Activated CD4-positive, alpha-beta memory T cell treated with anti-CD3 and anti-CD28 coated beads for 36 hours (primary cell): ENCODE measurements at regions of chr1 and their contacts with region 1.

Region 1: DNA sequence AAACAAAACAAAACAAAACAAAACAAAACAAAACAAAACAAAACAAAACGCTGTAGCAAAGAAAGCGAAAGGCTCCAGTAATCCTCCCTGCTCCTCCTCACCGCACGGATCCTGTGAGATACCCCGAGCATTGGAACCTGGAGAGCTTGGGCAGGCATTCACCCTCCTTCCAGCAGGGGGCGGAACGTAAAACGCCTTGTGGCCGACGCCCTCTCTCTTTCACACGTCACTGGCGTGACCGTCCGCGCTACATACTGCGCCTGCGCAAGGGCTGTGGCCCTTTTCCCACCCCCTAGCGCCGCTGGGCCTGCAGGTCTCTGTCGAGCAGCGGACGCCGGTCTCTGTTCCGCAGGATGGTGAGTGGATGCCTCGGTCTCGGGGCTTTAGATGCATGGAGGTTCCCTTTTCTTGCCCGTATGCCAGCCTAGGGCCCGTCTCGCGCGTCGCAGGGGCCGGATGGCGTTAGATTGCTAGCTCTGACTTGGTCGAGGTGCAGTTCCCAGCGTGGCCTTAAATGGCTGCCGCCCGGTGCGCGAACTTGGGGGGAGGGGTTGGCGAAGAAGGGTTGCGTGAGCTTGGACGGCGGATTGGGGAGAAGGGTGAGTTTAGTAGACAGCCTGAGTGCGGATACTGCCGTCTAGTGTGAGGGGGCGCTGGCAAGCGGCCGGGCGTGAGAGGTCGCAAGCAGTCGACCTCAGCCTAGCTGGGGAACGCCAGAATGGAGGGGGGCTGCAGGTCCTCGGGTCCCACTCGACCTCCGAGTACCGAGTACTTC is at the start of gene RPL5:
- DNase-seq: peak; percentile 98
- H3K4me3 Mint-ChIP-seq: peak within 1 kb of the TSS; percentile 100
- H3K27ac Mint-ChIP-seq: peak within 1 kb of the TSS; percentile 95
- H3K4me1 Mint-ChIP-seq: peaks cover 39% of the 10 kb centered on the region
- H3K27me3 Mint-ChIP-seq: peaks cover 3% of the 10 kb centered on the region
- total RNA-seq, gene RPL5: 1,530 to 1,539 TPM

Region 2: DNA sequence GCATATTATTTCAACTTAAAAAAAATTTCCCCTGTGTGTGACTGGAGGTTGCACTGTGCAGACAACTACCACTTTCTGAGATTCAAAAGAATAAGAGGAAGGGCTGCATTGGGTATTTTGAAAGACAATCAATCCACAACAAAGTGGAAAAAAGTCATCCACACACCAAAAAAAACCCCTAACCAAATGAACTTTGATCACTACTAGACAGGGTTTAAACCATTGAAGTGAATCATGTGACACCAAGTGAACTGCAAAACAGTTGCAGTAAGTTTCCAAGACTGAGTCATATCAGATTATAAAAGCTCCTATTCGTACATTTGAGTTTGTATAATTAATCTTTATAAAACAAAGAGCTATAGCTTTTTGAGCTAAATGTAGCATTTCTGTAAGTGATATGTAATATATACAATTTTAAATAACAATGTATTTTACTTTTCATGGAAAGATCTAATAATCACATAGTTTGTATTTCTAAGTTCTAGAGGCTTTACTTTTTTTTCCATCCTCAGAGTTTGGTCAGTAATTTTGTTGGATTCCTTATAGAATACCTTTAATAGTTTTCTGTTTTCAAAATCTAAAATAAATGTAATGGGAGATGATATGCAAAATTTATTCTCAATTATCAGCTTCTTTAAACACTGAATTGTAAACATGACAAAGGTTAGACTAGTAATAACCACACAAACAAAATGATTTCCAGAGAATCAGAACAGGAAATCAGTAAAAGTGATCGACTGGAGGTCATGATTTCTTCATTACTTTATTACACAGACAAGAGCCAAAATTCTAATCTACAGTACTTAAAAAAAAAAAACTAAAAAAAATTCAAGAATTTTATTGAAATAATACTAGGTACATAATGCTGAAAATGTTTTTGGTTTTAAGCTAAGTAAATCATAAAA is 294.7 kb before region 1 on chr1:
- CTCF ChIA-PET with region 1: interaction called, 3 read pairs
- POLR2A ChIA-PET with region 1: no interaction called
- intact Hi-C with region 1: loop called (anchors 1 kb)
- DNase-seq: no peak
- H3K4me3 Mint-ChIP-seq: peak overlapping the region; percentile 54
- H3K27ac Mint-ChIP-seq: peak overlapping the region; percentile 98
- H3K4me1 Mint-ChIP-seq: peaks cover 86% of the 10 kb centered on the region
- H3K27me3 Mint-ChIP-seq: no peaks in the 10 kb centered on the region

Region 3: DNA sequence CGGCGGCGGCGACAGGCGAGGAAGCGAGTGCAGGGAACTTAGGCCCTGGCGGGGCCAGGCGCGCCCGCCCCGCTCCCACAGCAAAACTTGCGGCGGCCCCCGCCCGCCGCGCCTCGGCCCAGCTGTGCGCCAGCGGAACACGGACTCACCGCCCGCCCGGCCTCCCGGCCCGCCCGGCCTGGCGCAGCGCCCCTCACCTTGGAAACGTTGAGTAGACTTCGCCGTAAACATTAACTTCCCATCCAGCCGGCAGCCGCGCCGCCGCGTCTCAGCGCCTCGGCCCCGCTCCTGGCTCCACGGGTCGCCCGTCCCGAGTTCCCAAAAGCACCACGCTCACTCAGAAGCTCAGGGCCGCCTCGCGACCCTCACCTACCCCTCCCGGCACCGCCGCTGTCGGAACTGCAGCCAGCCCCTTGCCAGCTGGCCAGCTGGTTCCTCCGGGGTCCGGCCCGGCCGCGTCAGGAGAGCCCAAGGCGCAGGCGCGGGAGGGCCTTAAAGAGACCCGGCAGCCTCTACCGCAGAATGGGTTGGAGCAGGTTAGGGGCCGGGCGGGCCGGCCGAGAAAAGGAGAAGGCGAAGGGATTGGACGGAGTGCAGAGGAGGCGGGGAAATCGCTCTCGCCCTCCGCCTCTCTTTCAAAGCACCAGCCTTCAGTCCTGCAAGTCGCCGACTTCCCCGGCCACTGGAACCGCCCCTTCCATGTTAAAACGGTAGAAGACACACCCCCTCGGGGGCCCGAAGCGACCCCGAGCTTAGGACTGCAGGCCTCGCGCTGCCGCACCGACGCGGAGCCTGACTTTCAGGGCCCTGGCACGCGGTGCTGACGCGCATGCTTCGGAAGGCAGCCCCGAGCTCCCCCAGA is 47.1 kb before region 1 on chr1 and contains the start of gene EVI5:
- CTCF ChIA-PET with region 1: no interaction called
- POLR2A ChIA-PET with region 1: no interaction called
- intact Hi-C with region 1: loop called (anchors 1 kb)
- DNase-seq: peak; percentile 70
- H3K4me3 Mint-ChIP-seq: peak within 1 kb of the TSS; percentile 71
- H3K27ac Mint-ChIP-seq: no peak within 1 kb of the TSS
- H3K4me1 Mint-ChIP-seq: peaks cover 13% of the 10 kb centered on the region
- H3K27me3 Mint-ChIP-seq: peaks cover 44% of the 10 kb centered on the region
- total RNA-seq, gene EVI5: 36.0 to 37.2 TPM

Region 4: GRCh38 chr1:92960395-92961130 is 128.6 kb after region 1 on chr1:
- CTCF ChIA-PET with region 1: interaction called, 21 read pairs
- POLR2A ChIA-PET with region 1: interaction called, 29 read pairs
- intact Hi-C with region 1: loop called (anchors 1 kb)
- DNase-seq: peak; percentile 75
- H3K4me3 Mint-ChIP-seq: peak overlapping the region; percentile 88
- H3K27ac Mint-ChIP-seq: peak overlapping the region; percentile 96
- H3K4me1 Mint-ChIP-seq: peaks cover 39% of the 10 kb centered on the region
- H3K27me3 Mint-ChIP-seq: no peaks in the 10 kb centered on the region

Region 5: DNA sequence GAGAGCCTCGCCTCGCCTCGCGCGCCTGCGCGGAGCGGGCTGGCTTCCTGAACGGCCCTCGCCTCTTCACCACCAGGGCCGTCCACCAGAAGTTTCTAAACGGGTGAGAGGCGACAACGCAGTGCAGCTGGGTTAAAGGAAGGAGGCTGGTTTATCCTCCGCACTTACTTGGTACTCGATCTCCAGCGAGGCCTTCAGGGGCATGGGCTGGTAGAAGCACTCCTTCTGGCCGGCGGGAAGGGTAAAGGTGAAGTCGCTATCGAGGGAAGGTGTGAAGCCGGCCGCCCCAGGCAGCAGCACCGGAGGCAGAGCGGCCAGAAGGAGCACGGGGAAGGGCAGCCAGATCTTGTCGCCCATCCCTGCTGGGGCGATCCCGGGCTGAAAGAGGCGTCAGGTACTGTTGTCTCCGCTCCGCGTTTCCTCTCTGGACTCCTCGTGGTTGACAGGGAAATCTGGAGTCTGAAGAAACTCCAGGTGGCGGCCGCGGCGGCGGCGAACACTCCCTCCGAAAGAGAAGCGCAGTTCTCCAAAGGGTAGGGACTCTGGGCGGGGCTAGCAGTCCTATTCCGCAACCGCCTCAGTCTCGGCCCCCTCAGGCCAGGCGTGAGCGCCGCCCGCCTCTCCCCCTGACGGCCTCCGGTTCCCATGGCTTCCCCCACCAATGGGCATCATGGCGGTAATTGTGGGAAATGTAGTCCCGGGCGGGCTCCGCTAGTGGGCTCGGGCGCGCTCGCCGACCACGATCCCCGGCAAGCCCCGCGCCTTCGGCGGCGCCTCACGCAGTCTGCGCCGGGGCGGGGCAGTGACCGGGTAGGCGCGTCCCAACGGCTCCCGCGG is 348.2 kb after region 1 on chr1 and contains the start of gene TMED5:
- CTCF ChIA-PET with region 1: no interaction called
- POLR2A ChIA-PET with region 1: no interaction called
- intact Hi-C with region 1: loop called (anchors 1 kb)
- DNase-seq: peak; percentile 98
- H3K4me3 Mint-ChIP-seq: peak within 1 kb of the TSS; percentile 88
- H3K27ac Mint-ChIP-seq: peak within 1 kb of the TSS; percentile 97
- H3K4me1 Mint-ChIP-seq: peaks cover 57% of the 10 kb centered on the region
- H3K27me3 Mint-ChIP-seq: no peaks in the 10 kb centered on the region
- total RNA-seq, gene TMED5: 47.0 to 49.2 TPM

Region 6: DNA sequence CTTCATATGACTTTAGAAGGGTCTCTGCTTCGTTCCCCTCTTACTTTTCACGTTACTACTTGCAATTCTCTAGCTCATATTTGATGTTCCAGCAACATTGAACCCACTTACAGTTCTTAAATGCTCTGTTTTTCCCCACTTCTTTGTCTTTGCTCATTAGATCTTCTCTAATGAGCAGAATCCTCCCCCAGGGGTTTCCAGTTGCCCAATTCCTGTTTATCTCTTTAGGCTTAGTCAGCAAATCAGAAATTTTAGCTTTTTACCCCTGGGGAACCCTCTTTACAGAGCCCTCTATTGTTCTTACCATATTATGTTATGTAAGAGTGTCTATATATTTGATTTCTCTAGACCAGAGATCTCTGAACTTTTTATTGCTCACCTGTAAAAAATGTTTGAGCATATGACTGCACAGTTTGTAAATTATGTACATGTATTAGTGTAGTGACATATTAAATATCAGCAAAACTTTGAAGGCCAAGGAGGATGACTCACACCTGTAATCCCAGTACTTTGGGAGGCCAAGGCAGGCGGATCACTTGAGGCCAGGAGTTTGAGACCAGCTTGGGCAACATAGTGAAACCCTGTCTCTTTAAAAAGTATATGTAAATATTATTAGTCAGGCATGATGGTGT is 687.4 kb after region 1 on chr1:
- CTCF ChIA-PET with region 1: no interaction called
- POLR2A ChIA-PET with region 1: no interaction called
- intact Hi-C with region 1: no loop called
- DNase-seq: no peak
- H3K4me3 Mint-ChIP-seq: no peak overlapping the region
- H3K27ac Mint-ChIP-seq: no peak overlapping the region
- H3K4me1 Mint-ChIP-seq: no peaks in the 10 kb centered on the region
- H3K27me3 Mint-ChIP-seq: no peaks in the 10 kb centered on the region